Dendritic cell treated with granulocyte-macrophage colony-stimulating factor and Interleukin-4, amounts not matched to agents 40 ng/mL and 50 ng/mL, for 4 days (primary cell): ENCODE measurements at regions of chr6 and their contacts with region 1.

Region 1: GRCh38 chr6:139134817-139135581 is at the start of gene HECA:
- H3K4me3 Mint-ChIP-seq: peak within 1 kb of the TSS; percentile 87
- H3K27ac Mint-ChIP-seq: peak within 1 kb of the TSS; percentile 95
- H3K4me1 Mint-ChIP-seq: peaks cover 76% of the 10 kb centered on the region
- H3K27me3 Mint-ChIP-seq: no peaks in the 10 kb centered on the region

Region 2: GRCh38 chr6:138588805-138589434 is 546.1 kb before region 1 on chr6:
- intact Hi-C with region 1: loop called (anchors 5 kb)
- H3K4me3 Mint-ChIP-seq: no peak overlapping the region
- H3K27ac Mint-ChIP-seq: no peak overlapping the region
- H3K4me1 Mint-ChIP-seq: peaks cover 42% of the 10 kb centered on the region
- H3K27me3 Mint-ChIP-seq: peaks cover 13% of the 10 kb centered on the region

Region 3: GRCh38 chr6:138817822-138818308 is 317.1 kb before region 1 on chr6:
- intact Hi-C with region 1: loop called (anchors 10 kb)
- H3K4me3 Mint-ChIP-seq: no peak overlapping the region
- H3K27ac Mint-ChIP-seq: no peak overlapping the region
- H3K4me1 Mint-ChIP-seq: peaks cover 13% of the 10 kb centered on the region
- H3K27me3 Mint-ChIP-seq: no peaks in the 10 kb centered on the region

Region 4: DNA sequence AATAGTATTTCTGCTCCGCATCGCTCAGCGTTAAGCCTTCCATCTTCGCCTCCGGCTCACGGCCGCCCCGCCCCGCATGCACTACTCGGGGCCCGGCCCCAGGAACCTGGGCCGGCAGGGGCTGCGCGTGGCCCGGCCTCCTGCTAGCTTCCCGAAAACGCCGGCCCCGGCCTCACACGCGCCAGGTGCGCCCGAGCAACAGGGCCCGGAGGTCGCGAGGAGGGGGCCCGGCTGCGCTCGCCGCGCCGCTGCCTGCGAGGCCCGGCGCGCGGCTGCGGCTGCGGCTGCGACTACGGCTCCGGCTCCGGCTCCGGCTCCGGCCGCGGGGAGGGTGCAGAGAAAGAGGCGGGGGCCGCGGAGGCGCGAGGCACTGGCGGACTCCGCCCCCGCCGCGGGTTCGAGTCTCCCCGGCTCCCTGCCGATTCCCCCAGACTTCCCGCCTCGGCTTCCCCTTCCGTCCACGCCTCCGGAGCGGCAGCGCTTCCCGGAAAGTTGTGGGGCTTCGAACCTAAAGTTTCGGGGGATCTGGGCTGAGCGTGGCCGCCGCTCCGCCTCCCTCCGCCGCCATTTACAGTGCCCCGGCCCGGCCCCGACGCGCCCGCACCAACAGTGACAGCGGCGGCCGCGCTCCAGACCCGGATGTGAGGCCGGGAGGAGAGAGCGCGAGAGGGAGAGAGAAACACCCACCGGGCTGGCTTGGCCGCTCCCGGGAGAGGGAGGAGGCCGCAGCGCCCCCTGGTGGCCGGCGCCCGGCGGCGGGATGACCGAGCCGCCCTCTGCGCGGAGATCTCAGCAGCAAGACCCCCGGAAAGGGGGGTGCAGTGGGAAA is 147.1 kb before region 1 on chr6 and contains the start of gene REPS1:
- intact Hi-C with region 1: loop called (anchors 10 kb)
- H3K4me3 Mint-ChIP-seq: peak within 1 kb of the TSS; percentile 88
- H3K27ac Mint-ChIP-seq: peak within 1 kb of the TSS; percentile 96
- H3K4me1 Mint-ChIP-seq: peaks cover 36% of the 10 kb centered on the region
- H3K27me3 Mint-ChIP-seq: no peaks in the 10 kb centered on the region

Region 5: GRCh38 chr6:139028658-139029469 is 106.1 kb before region 1 on chr6 and contains the start of gene ABRACL:
- intact Hi-C with region 1: loop called (anchors 5 kb)
- H3K4me3 Mint-ChIP-seq: no peak within 1 kb of the TSS
- H3K27ac Mint-ChIP-seq: no peak within 1 kb of the TSS
- H3K4me1 Mint-ChIP-seq: peaks cover 28% of the 10 kb centered on the region
- H3K27me3 Mint-ChIP-seq: peaks cover 2% of the 10 kb centered on the region

Region 6: DNA sequence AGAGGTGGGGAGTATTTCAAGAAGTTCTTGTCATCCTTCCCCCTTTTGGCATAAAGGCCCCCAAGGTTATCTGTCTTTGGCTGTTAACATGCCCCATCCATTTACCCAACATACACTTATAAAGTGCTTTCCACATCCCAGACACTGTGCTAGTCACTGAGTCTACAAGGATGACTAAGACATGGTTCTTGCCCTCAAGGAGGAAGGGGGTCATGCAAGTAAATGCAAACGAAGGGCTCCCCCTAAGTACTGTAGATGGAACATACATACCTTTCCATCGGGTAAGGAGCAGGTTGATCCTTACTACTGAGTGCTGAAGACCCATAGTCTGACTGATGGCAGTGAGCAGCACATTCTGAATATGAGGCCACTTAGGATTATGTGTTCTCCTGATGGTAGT is 38.2 kb after region 1 on chr6:
- intact Hi-C with region 1: loop called (anchors 5 kb)
- H3K4me3 Mint-ChIP-seq: no peak overlapping the region
- H3K27ac Mint-ChIP-seq: no peak overlapping the region
- H3K4me1 Mint-ChIP-seq: peaks cover 65% of the 10 kb centered on the region
- H3K27me3 Mint-ChIP-seq: no peaks in the 10 kb centered on the region

Region 7: DNA sequence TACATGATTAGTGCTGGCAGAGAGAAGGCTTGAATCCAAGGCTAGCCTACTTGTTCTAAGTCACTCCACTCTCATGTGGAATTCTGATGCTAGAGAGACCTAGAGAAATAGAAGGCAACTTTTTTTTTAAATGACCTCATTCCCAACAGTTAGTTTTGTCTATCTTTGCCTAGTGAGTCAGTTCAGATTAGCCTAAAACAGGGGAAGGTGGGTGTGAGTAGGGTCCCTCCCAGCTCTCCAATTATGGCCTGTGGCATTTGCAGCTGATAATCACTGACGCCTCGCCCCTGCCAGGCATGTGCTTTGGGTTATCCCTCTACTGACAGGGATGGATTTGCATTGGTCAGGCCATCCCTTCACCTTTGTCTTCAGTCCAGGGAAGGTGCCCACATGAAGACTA is 143.2 kb after region 1 on chr6:
- intact Hi-C with region 1: no loop called
- H3K4me3 Mint-ChIP-seq: no peak overlapping the region
- H3K27ac Mint-ChIP-seq: no peak overlapping the region
- H3K4me1 Mint-ChIP-seq: no peaks in the 10 kb centered on the region
- H3K27me3 Mint-ChIP-seq: no peaks in the 10 kb centered on the region

Region 8: DNA sequence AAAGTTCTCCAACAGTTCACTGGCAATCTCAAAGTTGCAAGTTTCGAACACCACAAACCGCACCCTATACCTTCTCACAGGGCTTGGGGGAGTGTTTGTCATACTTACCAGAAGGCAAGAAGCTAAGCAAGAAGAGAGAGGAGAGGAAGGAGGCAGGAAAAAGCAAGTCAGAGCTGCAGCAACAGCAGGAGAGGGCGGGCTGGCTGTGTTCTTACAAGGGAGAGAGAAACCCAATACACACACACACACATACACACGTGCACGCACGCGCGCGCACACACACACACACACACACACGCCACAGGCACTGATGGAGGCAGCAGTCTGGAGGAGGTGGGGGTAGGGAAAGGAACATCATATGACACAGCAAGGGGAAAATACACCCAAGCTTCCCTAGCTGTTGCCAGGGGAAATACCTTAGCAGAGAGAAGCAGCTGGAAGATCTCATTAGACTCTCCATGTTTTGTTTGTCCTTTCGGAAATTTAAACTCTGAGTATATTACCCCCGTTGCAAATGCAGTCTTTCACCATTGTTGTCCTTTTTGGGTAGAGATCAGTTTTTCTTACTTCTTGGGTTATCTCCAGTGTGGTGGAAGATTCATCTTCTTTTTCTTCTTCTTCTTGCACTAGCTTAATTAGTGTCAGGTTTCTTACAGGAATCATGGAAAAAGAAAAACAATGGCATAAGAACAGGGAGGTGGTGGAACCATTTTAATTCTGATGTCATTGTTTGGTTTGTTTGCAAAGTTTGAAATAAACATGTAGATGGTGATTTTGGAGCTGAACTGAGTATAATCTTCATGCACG is 157.0 kb after region 1 on chr6 and contains the start of gene TXLNB:
- intact Hi-C with region 1: loop called (anchors 5 kb)
- H3K4me3 Mint-ChIP-seq: peak within 1 kb of the TSS; percentile 46
- H3K27ac Mint-ChIP-seq: peak within 1 kb of the TSS; percentile 94
- H3K4me1 Mint-ChIP-seq: peaks cover 51% of the 10 kb centered on the region
- H3K27me3 Mint-ChIP-seq: no peaks in the 10 kb centered on the region

Region 9: DNA sequence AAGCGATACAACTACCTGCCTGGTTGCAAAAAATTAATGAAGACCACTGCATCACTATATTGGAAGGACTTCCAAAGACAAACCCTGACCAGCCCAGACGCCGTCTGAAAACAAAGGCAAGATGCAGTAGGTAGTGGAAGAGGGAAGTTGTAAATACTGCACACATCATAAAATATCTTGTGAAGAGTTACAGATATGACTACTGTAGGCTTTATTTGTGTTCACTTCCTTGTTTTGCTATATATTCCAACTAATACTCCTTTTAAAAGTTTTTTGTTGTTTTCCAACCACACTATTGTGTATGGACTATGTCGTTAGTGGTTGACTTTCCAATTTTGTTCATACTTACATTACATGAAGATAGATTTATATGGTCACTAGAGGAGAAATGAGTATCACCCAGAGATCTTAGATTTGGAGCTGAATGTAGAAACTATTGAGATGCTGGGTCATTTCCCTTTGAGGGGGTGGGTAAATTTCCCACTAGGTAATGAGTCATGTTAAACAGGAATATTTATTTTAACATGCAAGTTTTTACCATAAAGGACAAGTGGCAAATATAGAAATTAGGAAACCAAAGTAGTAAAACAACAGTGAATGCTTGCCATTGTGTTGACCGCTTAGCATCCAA is 173.4 kb after region 1 on chr6:
- intact Hi-C with region 1: no loop called
- H3K4me3 Mint-ChIP-seq: no peak overlapping the region
- H3K27ac Mint-ChIP-seq: peak overlapping the region; percentile 88
- H3K4me1 Mint-ChIP-seq: peaks cover 38% of the 10 kb centered on the region
- H3K27me3 Mint-ChIP-seq: no peaks in the 10 kb centered on the region